GM23248 (cell line): ENCODE measurements at regions of chr4 and their contacts with region 1.

Region 1: GRCh38 chr4:155442267-155443105 is 65.7 kb upstream of the MAP9 start:
- DNase-seq: peak; percentile 70
- H3K4me3 ChIP-seq: 0 out of 2 replicates have a peak overlapping the region, but pooled peaks have one; percentile 28
- H3K27ac ChIP-seq: no peak overlapping the region
- H3K4me1 ChIP-seq: no peaks in the 10 kb centered on the region
- H3K27me3 ChIP-seq: 0 out of 2 replicates have a peak, but pooled peaks cover 7% of the 10 kb centered on the region

Region 2: DNA sequence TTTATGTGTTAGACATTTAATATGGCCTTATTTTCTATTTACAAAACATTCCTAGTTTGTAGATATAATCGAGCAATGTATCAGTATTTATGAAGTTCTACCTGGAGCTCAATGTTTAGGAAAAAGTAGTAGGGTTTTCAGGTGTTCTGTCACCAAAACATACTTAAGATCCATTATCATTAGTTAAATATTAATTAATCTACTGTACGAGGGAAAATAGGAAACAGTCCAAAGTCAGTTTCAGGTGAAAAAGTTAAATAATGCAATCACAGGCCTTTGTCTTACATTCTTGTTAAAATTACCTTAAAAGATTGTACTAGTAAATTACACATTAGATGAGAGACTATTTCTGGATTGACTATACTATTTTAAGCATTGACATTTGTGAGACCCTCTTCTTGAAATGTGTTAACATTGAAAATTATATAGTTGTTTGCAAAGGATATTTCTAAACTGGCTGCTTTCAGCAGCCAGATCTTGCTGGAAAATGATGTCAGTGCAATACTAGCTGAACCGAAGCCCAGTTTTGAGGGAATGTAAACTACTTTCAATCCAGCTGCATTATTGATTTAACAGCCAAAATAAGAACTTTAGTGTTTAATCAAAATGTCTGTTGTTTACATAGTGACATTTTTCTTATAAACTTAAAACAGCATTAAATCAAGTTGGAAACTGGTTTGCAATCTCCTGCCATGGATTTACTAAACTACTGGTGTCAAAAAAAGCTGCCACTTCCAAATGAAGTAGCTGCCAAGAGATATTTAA is 335.7 kb after region 1 on chr4:
- in situ Hi-C with region 1: loop called (anchors 5 kb)
- DNase-seq: peak; percentile 30
- H3K4me3 ChIP-seq: no peak overlapping the region
- H3K27ac ChIP-seq: no peak overlapping the region
- H3K4me1 ChIP-seq: no peaks in the 10 kb centered on the region
- H3K27me3 ChIP-seq: no peaks in the 10 kb centered on the region

Region 3: DNA sequence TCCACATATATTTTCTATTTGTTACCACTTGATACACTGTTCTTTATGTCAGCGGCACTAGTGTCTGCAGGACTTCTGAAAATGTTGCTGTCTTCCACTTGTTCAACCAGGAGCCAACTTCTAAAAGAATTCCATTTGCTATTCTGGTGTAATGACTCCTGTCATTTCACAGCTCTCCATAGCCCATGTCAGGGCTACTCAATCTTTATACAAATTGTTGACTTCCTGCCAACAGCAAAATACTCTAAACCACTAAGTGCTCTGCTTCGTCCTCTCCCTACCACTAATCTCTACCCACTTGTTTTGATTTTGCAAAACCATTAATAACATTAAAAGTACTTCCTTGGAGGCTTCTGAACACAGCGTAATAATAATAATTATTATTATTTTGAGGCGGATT is 504.0 kb after region 1 on chr4:
- in situ Hi-C with region 1: loop called (anchors 25 kb)
- DNase-seq: no peak
- H3K4me3 ChIP-seq: no peak overlapping the region
- H3K27ac ChIP-seq: no peak overlapping the region
- H3K4me1 ChIP-seq: no peaks in the 10 kb centered on the region
- H3K27me3 ChIP-seq: no peaks in the 10 kb centered on the region